ENCODE measurements at regions of chr1 and their contacts with region 1.

Region 1: GRCh38 chr1:109722908-109723691 is 11.0 kb downstream of the GSTM5 start:
- DNase-seq: no peak
- ATAC-seq: no peak

Region 2: GRCh38 chr1:109570417-109570827 is 152.7 kb before region 1 on chr1:
- intact Hi-C with region 1: no loop called
- DNase-seq: no peak
- ATAC-seq: peak in 1 of 2 donors; percentile 72

Region 3: DNA sequence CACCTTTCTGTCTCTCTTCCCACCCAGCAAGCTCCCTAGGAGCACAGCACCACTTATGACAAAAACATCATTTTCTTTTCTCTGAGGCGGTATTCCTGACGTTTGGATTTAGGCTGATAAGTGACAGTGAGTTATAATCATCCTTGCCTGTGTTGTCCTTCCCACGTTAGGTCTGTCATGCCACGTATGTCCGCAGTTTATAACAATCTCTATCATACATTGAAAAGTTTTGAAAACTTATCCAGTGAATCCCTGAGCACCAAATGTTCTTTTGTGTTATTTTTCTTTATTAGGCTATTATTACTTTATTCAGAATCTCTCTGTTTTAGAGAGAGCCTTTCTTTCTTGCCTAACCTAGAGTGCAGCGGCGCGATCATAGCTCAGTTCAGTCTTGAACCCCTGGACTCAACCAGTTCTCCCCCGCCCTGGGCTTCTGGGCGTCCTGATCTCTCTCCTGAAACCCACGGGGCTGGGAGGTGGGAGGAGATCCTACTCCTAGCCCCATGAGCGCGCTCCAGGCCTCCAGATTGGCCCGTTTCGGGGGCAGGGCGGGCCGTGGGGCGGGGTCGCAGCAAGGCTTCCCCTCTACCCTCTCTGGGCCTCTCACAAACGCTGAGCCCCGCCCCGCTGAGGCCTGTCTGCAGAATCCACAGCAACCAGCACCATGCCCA is 55.5 kb before region 1 on chr1 and contains the start of gene GSTM2:
- intact Hi-C with region 1: loop called in 1 of 2 experiments (anchors 5 kb)
- DNase-seq: peak; percentile 95
- ATAC-seq: peak; percentile 100
- total RNA-seq, gene GSTM2: 36.7 to 44.4 TPM

Region 4: GRCh38 chr1:110034451-110035235 is 311.5 kb after region 1 on chr1 and contains the start of gene STRIP1:
- intact Hi-C with region 1: no loop called
- DNase-seq: peak; percentile 92
- ATAC-seq: peak; percentile 97 to 99
- total RNA-seq, gene STRIP1: 18.2 to 19.0 TPM